ENCODE measurements at regions of chr1 and their contacts with region 1.

Region 1: GRCh38 chr1:201955009-201955728 is at the start of gene TIMM17A:
- DNase-seq: peak; percentile 97
- H3K4me3 Mint-ChIP-seq: peak within 1 kb of the TSS; percentile 99
- H3K27ac Mint-ChIP-seq: peak within 1 kb of the TSS; percentile 87
- H3K4me1 Mint-ChIP-seq: peaks cover 20% of the 10 kb centered on the region
- H3K27me3 Mint-ChIP-seq: no peaks in the 10 kb centered on the region
- total RNA-seq, gene TIMM17A: 66.5 to 67.2 TPM

Region 2: DNA sequence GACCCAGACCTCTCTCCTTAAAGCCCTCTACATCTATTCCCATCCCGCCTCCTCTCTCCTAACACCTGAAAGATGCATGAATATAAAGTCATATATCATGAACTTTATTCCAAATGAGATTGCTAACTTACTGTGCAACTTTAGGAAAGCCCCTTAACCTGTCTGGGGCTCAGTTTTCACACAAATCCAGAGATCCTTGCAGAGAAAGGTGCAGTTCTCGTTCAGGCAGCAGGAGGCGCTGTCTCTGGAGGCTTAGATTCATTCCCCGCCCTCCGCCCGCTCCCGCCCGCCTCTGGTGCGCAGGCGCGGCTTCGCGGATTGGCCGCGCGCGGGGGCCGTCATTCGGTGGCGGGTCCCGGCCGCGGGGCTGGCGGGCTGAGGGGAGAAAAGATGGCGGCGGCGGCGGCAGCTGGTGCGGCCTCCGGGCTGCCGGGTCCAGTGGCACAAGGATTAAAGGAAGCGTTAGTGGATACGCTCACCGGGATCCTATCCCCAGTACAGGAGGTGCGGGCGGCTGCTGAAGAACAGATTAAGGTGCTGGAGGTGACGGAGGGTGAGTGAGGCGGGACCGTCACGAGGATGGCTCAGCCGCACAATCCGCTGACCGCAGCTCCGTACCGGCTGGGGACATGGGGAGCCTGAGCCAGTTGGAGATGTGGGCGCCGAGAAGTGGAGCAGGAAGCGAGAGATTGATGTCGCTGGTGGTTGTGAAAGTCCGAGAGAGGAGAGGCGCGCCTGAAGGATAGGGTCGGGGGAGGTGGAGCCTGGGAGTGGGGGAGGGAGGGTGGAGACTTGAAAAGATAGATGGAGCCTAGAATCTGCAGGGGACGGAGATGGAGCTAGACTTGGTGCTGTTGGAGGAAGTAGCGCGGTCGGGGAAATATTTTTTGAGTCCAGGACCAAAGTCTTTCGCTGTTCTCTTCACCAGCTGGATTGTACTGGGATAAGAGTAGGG is 126.1 kb before region 1 on chr1 and contains the start of gene IPO9:
- CTCF ChIA-PET with region 1: interaction called, 4 read pairs
- POLR2A ChIA-PET with region 1: no interaction called
- intact Hi-C with region 1: loop called (anchors 1 kb)
- DNase-seq: peak; percentile 97
- H3K4me3 Mint-ChIP-seq: peak within 1 kb of the TSS; percentile 99
- H3K27ac Mint-ChIP-seq: peak within 1 kb of the TSS; percentile 94
- H3K4me1 Mint-ChIP-seq: peaks cover 30% of the 10 kb centered on the region
- H3K27me3 Mint-ChIP-seq: no peaks in the 10 kb centered on the region
- total RNA-seq, gene IPO9: 67.6 to 67.9 TPM

Region 3: GRCh38 chr1:202034683-202035462 is 79.7 kb after region 1 on chr1:
- CTCF ChIA-PET with region 1: no interaction called
- POLR2A ChIA-PET with region 1: no interaction called
- intact Hi-C with region 1: no loop called
- DNase-seq: peak; percentile 14
- H3K4me3 Mint-ChIP-seq: no peak overlapping the region
- H3K27ac Mint-ChIP-seq: no peak overlapping the region
- H3K4me1 Mint-ChIP-seq: no peaks in the 10 kb centered on the region
- H3K27me3 Mint-ChIP-seq: peaks cover 1% of the 10 kb centered on the region

Region 4: DNA sequence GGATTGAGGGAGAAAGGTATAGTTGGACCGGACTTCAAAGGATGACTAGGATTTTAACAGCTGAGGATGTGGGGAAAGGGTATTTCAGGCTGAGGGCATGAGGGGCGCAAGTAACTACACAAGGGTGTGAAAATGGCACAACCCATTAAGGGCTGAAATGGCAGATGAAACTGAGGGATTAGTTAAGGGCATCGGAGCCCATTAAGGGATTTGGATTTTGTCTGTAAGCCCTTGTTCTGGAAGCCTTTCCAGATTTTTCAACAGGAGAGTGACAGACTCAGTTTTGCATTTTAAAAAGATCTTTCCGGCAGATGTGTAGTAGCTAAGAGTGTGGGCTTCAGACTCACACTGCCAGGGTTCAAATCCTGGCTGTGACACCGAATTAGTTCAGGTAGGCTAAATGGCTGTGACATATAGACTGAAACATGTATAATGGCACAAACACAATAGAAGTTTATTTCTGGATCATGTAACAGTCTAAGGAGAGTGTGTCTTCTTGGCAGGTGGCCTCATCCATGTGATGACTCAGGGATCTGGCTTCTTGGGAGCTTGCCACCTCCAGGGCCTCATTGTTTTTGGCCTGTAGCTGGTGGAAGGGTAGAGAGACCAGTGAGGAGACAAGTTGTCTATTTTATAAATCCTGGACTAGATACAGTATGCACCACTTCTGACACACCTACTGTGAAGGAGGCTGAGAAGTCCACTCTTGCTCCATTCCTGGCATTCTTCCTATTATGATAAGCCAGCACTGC is 337.0 kb after region 1 on chr1:
- CTCF ChIA-PET with region 1: no interaction called
- POLR2A ChIA-PET with region 1: no interaction called
- intact Hi-C with region 1: no loop called
- DNase-seq: no peak
- H3K4me3 Mint-ChIP-seq: no peak overlapping the region
- H3K27ac Mint-ChIP-seq: no peak overlapping the region
- H3K4me1 Mint-ChIP-seq: peaks cover 19% of the 10 kb centered on the region
- H3K27me3 Mint-ChIP-seq: no peaks in the 10 kb centered on the region